PC-9 (cell line): ENCODE measurements at regions of chr14 and their contacts with region 1.

Region 1: GRCh38 chr14:55446218-55446654 is 5.8 kb upstream of the TBPL2 start:
- DNase-seq: peak in 1 of 2 experiments; percentile 49
- H3K4me3 ChIP-seq: no peak overlapping the region
- H3K27ac ChIP-seq: peak overlapping the region; percentile 86; the same call in 1 of the 2 replicates
- H3K4me1 ChIP-seq: peaks cover 49% of the 10 kb centered on the region
- H3K27me3 ChIP-seq: no peaks in the 10 kb centered on the region
- CTCF ChIP-seq: peak; percentile 88

Region 2: DNA sequence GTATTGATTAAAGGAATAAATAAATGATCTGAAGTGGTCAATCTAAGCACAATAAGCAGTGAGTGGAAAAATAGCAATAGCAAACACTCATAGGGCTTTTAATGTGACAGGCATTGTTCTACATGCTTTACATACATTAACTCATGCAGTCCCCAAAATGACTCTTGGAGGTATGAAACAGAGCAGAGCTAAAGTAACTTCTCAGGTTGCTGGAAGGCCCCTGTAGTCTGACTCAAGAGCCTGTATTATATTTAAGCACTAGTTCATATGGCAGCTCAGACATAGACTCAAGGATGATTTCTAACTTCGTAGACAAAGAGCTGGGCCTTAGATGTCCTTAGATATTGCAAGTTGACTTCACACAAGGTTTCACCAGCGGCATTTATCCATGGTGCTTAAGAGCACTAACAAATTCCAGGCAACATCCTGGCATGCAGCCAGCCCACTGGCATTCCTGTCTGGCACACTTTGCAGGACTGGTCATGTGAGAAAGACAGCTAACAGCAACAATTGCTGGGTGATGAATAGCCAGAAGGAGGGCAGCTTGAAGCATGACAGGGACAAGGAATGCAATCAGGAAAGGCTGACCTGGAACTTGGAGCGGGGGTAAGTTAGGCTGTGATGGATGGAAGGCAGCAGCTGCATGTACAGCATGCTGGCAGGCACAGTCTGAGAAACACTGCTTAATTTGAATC is 110.8 kb after region 1 on chr14:
- CTCF ChIA-PET with region 1: interaction called, 6 read pairs
- POLR2A ChIA-PET with region 1: interaction called, 3 read pairs
- intact Hi-C with region 1: loop called (anchors 1 kb)
- DNase-seq: peak; percentile 90 to 91
- H3K4me3 ChIP-seq: no peak overlapping the region
- H3K27ac ChIP-seq: no peak overlapping the region
- H3K4me1 ChIP-seq: peaks cover 14% of the 10 kb centered on the region
- H3K27me3 ChIP-seq: no peaks in the 10 kb centered on the region
- CTCF ChIP-seq: no peak

Region 3: DNA sequence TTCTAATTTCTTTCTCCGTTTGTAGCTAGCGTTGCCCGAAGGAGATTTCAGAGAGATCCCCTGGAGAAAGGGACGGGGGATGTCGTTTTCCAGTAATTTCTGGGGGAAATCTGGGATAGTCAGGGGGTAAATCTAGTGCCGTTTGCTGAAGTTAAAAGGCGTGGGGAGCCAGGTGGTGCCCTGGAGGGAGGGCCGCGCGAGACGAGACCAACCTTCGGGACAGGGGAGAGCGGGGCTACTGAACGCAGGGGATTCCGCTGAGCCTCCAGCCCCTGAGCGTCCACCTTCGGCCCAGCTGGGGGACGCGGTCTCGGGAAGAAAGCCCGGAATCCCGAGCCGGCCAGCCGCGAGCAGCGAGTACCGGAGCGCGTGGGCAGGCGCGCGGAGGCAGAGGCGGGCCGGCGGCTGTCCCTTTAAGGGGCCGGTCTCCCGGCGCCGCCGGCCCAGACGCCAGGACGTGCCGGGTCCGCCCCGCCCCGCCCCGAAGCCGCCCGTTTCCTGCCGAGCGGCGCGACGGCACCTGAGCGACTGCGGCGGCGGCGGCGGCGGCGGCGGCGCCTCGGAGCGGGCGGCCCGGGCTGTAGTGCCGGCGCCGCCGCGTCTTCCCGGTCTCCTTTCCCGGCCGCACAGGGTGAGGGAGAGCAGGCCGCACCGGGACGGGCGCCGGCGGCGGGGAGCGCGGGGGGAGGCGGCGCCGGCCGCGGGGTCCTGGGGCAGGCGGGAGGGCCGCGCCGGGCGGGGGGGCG is 133.7 kb after region 1 on chr14 and contains the start of gene KTN1:
- CTCF ChIA-PET with region 1: interaction called, 14 read pairs
- POLR2A ChIA-PET with region 1: no interaction called
- intact Hi-C with region 1: loop called (anchors 1 kb)
- DNase-seq: peak; percentile 61 to 85
- H3K4me3 ChIP-seq: peak within 1 kb of the TSS; percentile 85
- H3K27ac ChIP-seq: peak within 1 kb of the TSS; percentile 35
- H3K4me1 ChIP-seq: peaks cover 52% of the 10 kb centered on the region
- H3K27me3 ChIP-seq: no peaks in the 10 kb centered on the region
- CTCF ChIP-seq: no peak
- total RNA-seq, gene KTN1: 188 and 250 TPM in 2 replicates

Region 4: DNA sequence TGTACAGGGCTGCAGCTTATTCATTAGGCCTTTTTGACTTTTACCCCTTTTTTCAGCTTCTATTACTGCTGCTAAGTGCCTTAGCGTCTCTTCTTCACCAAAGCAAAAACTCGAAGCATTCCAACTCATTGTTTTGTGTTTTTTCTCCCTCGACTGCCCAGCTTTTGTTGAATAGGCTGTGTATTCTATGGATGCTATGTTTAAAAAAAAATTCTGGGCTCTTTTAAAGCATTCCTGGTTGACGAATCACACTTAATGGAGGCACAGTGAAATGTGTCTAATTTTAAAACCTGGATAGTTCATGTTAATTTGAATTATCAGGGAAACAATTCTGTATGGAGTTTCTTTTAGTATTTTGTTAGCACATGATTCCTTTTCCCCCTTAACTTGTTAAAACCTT is 163.4 kb after region 1 on chr14:
- CTCF ChIA-PET with region 1: no interaction called
- POLR2A ChIA-PET with region 1: no interaction called
- intact Hi-C with region 1: loop called (anchors 5 kb)
- DNase-seq: peak; percentile 7 to 49
- H3K4me3 ChIP-seq: no peak overlapping the region
- H3K27ac ChIP-seq: 0 out of 2 replicates have a peak overlapping the region, but pooled peaks have one; percentile 9
- H3K4me1 ChIP-seq: peaks cover 55% of the 10 kb centered on the region
- H3K27me3 ChIP-seq: no peaks in the 10 kb centered on the region
- CTCF ChIP-seq: no peak

Region 5: GRCh38 chr14:55665067-55665675 is 218.9 kb after region 1 on chr14:
- CTCF ChIA-PET with region 1: no interaction called
- POLR2A ChIA-PET with region 1: no interaction called
- intact Hi-C with region 1: loop called (anchors 10 kb)
- DNase-seq: no peak
- H3K4me3 ChIP-seq: no peak overlapping the region
- H3K27ac ChIP-seq: no peak overlapping the region
- H3K4me1 ChIP-seq: no peaks in the 10 kb centered on the region
- H3K27me3 ChIP-seq: no peaks in the 10 kb centered on the region
- CTCF ChIP-seq: no peak

Region 6: DNA sequence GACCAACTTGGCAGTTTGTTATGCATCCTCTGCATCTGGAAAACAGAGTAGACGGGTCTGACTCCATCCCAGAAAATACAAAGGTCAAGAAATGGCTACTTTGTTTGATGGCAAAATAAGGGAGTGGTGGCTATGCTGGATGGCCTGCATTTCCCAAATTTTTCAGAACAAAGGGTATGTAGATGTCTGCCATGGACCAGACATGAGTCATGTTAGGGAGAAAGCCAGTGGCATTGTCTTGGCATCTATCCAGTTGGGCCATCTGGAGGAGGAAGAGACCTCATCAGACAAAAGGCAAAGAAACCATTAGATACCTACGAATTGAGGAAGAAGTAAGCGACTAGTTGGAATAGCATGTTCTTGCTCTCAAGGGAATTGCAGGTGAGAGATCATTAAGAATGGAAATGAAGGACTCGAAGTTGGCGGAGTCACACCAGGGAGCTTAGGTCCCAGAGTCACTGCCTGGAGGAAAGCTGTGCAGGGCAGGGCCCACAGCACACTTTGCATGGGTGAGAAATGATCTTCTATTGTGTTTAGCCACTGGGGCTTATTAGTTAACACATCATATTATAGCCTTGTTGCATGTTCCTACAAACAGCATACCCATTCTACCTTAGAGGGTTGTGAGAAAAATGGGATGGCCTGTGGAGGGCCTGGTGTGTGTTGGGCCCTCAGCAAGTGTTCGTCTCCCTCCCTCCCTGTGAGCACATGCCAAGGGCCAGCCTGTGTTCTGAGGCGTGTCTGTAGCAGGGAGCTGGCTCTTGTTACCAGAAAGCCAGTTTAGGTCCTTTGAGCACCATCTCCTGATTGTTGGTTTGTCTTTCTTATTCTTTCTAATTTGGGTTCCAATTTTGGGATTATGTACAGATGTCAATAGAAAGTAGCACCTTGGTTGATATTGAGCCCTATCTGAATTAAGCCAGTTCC is 253.2 kb after region 1 on chr14:
- CTCF ChIA-PET with region 1: no interaction called
- POLR2A ChIA-PET with region 1: no interaction called
- intact Hi-C with region 1: loop called (anchors 2 kb)
- DNase-seq: peak; percentile 78 to 83
- H3K4me3 ChIP-seq: no peak overlapping the region
- H3K27ac ChIP-seq: no peak overlapping the region
- H3K4me1 ChIP-seq: peaks cover 18% of the 10 kb centered on the region
- H3K27me3 ChIP-seq: no peaks in the 10 kb centered on the region
- CTCF ChIP-seq: no peak